ENCODE measurements at regions of chr16 and their contacts with region 1.

Region 1: DNA sequence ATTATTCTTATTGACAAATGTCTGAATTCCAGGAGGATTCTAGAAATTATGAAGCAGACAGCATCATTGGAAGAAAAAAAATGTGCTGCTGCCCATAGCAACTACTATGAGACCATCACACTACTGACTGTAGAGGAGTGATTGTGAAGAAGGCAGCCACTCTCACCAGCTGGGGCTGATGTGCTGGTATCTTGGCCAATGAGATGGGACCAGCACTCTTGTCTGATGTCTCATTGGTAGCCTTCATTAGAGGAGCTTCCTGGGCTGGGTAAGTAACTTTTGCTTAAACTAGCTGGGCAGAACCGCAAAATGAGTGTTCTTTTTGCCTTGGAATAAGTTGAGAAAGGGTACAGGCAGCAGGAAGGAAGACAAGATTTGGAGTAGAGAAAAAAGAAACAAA is 48.5 kb downstream of the CLEC19A start:
- DNase-seq: no peak

Region 2: DNA sequence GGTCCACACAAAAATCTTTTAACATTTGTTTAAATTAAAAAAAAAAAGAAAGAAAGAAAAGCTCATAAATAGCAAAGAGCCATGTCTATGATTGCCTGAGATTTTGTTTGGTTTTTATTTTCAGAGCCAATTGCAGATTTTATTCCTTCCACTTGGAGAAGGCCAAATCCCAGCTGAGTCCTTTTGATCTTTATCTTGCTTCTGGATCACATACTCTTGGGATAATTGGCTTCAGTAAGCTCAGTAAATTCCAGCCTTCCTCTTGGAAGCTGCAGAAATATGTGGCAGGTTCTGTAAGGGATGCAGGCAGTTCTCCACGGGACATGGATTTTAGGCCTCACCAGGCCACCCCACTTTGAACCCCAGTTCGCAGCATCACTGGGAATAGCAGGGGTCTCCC is 20.4 kb after region 1 on chr16:
- intact Hi-C with region 1: loop called (anchors 2 kb)
- DNase-seq: no peak